Sciatic nerve (tissue), 2 donors: ENCODE measurements at regions of chr3 and their contacts with region 1.

Region 1: GRCh38 chr3:193761969-193762368 is 169.0 kb downstream of the OPA1 start:
- DNase-seq: no peak
- ATAC-seq: no peak

Region 2: DNA sequence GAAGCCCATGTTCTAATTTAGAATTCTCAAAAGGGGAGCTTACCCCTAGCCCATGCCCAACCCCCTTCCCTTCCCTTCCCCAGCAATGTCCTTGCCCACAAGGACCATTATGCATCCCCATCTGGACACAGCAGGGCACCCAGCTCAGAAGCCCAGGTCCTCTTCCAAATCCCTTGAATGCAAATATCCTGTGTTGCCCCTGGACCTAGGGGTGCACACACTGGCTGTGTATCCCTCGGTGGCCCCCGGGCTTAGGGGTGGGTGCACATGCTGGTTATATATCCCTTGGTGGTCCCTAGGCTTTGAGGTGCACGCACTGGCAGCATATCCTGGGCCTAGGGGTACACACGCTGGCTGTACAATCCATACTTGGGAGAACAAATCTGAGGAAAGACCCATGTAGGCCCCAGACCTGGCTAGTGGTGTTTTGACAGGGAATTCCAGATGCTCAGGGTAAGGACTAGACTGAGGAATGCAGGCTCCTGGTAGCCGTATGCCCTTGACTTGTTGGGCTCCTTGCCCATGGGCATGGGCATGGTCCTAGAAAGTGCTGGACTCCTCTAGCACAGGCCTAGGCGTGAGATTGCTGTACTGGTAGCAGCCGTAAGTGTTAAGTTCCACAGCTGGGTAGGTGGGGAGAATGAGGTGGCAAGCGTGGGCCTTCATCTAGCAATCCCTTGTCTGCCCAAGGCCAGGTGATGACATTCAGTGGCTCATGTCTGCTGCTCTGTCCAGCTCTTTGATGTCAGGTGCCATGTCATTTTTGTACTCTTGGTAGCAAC is 53.5 kb after region 1 on chr3:
- intact Hi-C with region 1: loop called (anchors 2 kb)
- DNase-seq: no peak
- ATAC-seq: no peak

Region 3: DNA sequence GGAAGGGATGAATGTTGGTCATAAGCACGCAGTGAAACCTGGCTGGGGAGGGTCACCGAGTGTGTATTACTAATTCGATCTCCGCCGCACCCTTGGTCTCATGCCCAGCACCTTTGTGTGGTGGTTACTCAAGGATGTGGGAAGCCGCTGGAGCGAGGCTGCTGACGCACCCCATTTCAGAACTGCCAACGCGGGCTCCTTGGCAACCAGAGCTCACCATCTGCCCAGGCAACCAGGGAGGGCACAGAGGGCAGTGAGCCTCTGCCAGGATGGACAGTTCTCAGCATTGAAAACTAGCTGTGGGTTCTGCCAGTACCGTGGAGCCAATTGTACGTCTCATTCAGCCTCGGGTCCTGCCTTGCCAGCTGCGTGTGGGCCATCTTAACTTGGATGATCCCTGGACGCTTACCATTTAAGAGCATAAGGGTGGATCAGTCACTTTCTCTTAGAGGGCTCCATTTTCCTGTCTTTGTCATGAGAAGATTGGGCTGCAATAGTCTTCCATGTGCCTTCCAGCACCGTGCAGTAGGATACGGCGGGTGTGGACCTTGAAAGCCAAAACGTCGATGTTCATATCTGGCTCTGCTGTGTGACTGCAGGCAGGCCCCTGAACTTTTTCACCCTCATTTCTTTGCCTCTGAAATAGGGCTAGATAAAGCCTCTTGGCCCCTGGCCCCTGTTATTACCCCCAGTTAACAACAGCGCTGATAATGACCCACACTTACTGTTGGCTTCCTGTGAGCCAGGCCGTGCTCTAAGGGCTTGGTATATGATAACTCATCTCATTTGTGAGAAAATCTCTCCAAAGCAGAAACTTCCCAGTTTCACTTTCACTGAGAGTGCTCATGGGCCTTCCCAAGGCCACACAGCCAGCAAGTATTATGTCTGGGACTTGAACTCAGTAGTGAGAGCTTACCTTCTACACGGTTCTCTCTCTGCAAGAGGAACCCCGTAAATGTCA is 69.8 kb after region 1 on chr3:
- intact Hi-C with region 1: no loop called
- DNase-seq: no peak
- ATAC-seq: peak; percentile 50

Region 4: GRCh38 chr3:193865339-193865738 is 103.4 kb after region 1 on chr3:
- intact Hi-C with region 1: no loop called
- DNase-seq: no peak
- ATAC-seq: no peak

Region 5: DNA sequence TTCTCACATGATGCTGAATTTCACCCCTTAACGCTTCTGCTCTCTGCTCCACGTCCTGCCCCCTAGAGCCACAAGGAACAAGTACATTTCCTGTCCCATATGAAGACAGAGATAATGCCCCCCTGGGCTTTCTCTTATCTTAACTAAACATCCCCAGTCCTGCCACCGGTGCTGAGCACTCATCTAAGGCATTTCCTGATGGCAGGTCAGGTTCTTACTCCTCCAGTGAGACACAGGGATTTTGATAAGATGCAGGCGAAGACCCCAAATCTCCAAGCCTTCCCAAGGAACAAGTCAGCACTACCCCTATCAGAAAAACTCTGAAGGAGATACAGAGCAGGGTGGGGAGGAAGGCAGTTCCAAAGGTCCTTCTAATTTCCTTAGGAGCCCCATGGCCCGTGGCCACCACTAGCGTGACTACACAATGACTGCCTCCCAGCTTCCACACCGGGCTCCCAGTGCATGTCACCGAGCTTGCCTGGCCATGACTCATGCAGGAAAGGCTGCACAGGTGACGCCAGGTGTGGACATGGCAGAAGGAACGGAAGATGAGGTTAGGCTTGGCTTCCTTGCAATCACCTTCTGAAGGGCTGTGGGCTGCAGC is 1356.1 kb after region 1 on chr3:
- intact Hi-C with region 1: no loop called
- DNase-seq: no peak
- ATAC-seq: no peak